K562 (cell line): ENCODE measurements at regions of chr6 and their contacts with region 1.

Region 1: GRCh38 chr6:26031595-26032339 is 55.5 kb upstream of the HFE start:
- DNase-seq: peak; percentile 82 to 99 (median 94)
- ATAC-seq: peak; percentile 67
- H3K4me3 ChIP-seq: peak overlapping the region; percentile 61
- H3K27ac ChIP-seq: peak overlapping the region; percentile 99
- H3K4me1 ChIP-seq: peaks cover 16 to 42% of the 10 kb centered on the region in 2 experiments
- H3K27me3 ChIP-seq: no peaks in the 10 kb centered on the region
- CTCF ChIP-seq: peak; percentile 28 to 60 (median 40)
- EP300 ChIP-seq: peak; percentile 77
- POLR2A ChIP-seq: peak; percentile 100
- RAD21 ChIP-seq: peak; percentile 4 to 31; a peak in 1 of 4 replicates

Region 2: GRCh38 chr6:25992413-25993037 is 39.2 kb before region 1 on chr6:
- CTCF ChIA-PET with region 1: no interaction called
- POLR2A ChIA-PET with region 1: interaction called, 47 read pairs
- in situ Hi-C with region 1: no loop called
- intact Hi-C with region 1: no loop called
- DNase-seq: peak; percentile 95 to 98 (median 95)
- ATAC-seq: peak; percentile 93
- H3K4me3 ChIP-seq: peak overlapping the region; percentile 72
- H3K27ac ChIP-seq: peak overlapping the region; percentile 95
- H3K4me1 ChIP-seq: peaks cover 10 to 11% of the 10 kb centered on the region in 2 experiments
- H3K27me3 ChIP-seq: no peaks in the 10 kb centered on the region
- CTCF ChIP-seq: peak; percentile 100
- EP300 ChIP-seq: peak; percentile 44
- POLR2A ChIP-seq: peak; percentile 93
- RAD21 ChIP-seq: peak; percentile 82 to 91

Region 3: DNA sequence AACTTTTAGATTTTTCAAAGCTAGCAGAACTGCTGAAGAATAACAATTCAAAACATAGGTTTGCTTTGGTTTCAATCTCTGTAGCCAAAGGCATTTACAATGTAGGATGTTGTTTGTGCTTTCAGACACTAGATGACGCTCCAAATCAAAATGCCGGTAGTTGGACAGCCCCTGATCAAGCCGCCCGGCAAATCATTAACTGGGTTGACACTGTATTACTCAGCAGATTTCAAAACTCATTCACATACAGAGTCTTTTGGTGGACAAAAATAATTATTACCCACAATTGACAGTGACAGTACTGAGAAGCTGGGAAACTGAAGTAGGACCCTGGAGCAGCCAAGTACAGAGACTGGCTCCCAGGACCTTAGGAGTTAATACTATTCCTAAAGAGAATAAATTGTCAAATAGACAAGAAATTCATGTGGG is 34.2 kb after region 1 on chr6:
- CTCF ChIA-PET with region 1: no interaction called
- POLR2A ChIA-PET with region 1: interaction called, 597 read pairs
- in situ Hi-C with region 1: no loop called
- intact Hi-C with region 1: no loop called
- DNase-seq: peak; percentile 80 to 91 (median 84)
- ATAC-seq: peak; percentile 91
- H3K4me3 ChIP-seq: no peak overlapping the region
- H3K27ac ChIP-seq: peak overlapping the region; percentile 70
- H3K4me1 ChIP-seq: peaks cover under 1 to 6% of the 10 kb centered on the region in 2 experiments; a peak in 2 of 5 replicates
- H3K27me3 ChIP-seq: no peaks in the 10 kb centered on the region
- CTCF ChIP-seq: peak; percentile 89 to 98 (median 93)
- EP300 ChIP-seq: peak; percentile 32; the same call in 1 of the 2 replicates
- POLR2A ChIP-seq: no peak
- RAD21 ChIP-seq: peak; percentile 99

Region 4: GRCh38 chr6:26122793-26123674 is 91.3 kb after region 1 on chr6:
- CTCF ChIA-PET with region 1: no interaction called
- POLR2A ChIA-PET with region 1: interaction called, 369 read pairs
- in situ Hi-C with region 1: no loop called
- intact Hi-C with region 1: loop called (anchors 1 kb)
- DNase-seq: peak; percentile 79 to 99 (median 86)
- ATAC-seq: peak; percentile 62
- H3K4me3 ChIP-seq: peak overlapping the region; percentile 72
- H3K27ac ChIP-seq: peak overlapping the region; percentile 95
- H3K4me1 ChIP-seq: peaks cover 3 to 7% of the 10 kb centered on the region in 2 experiments; a peak in 4 of 5 replicates
- H3K27me3 ChIP-seq: no peaks in the 10 kb centered on the region
- CTCF ChIP-seq: peak in 1 of 3 experiments; percentile 23; a peak in 1 of 6 replicates
- EP300 ChIP-seq: peak; percentile 99
- POLR2A ChIP-seq: no peak; the same call in none of the 2 replicates
- RAD21 ChIP-seq: 0 out of 4 replicates have a peak, but pooled peaks of 1 of the 2 experiments have one; percentile 6

Region 5: DNA sequence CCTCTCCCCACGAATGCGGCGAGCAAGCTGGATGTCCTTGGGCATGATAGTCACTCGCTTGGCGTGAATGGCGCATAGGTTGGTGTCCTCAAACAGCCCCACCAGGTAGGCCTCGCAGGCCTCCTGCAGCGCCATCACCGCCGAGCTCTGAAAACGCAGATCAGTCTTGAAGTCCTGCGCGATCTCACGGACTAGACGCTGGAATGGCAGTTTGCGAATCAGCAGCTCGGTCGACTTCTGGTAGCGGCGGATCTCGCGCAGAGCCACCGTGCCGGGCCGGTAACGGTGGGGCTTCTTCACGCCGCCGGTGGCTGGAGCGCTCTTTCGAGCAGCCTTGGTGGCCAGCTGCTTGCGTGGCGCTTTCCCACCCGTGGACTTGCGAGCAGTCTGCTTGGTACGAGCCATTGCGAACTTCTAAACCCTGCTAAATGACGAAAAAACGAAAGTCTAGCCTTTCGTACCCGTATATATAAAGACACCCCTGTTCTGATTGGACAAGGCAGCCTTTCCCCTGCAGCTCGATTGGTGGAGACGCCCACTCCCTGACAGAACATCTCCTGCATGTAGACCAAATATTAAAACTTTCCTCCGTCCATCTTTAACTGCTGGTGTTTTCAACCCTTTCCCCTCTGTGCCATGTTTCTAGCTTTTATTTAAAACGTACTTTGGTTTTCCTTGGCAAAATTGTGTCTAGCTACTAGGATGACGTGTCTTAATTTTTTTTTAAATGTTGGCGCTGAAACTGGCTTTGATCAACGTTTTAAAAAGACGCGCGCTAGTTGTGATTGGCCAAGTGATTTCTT is 165.3 kb after region 1 on chr6:
- CTCF ChIA-PET with region 1: no interaction called
- POLR2A ChIA-PET with region 1: interaction called, 225 read pairs
- in situ Hi-C with region 1: no loop called
- intact Hi-C with region 1: loop called (anchors 1 kb)
- DNase-seq: peak; percentile 89 to 93 (median 90)
- ATAC-seq: peak; percentile 53
- H3K4me3 ChIP-seq: peak overlapping the region; percentile 86
- H3K27ac ChIP-seq: peak overlapping the region; percentile 99
- H3K4me1 ChIP-seq: peaks cover 7 to 13% of the 10 kb centered on the region in 2 experiments
- H3K27me3 ChIP-seq: no peaks in the 10 kb centered on the region
- CTCF ChIP-seq: 0 out of 6 replicates have a peak, but pooled peaks of 1 of the 3 experiments have one; percentile 19
- EP300 ChIP-seq: peak; percentile 43
- POLR2A ChIP-seq: peak; percentile 97
- RAD21 ChIP-seq: 0 out of 4 replicates have a peak, but pooled peaks of 1 of the 2 experiments have one; percentile 8

Region 6: DNA sequence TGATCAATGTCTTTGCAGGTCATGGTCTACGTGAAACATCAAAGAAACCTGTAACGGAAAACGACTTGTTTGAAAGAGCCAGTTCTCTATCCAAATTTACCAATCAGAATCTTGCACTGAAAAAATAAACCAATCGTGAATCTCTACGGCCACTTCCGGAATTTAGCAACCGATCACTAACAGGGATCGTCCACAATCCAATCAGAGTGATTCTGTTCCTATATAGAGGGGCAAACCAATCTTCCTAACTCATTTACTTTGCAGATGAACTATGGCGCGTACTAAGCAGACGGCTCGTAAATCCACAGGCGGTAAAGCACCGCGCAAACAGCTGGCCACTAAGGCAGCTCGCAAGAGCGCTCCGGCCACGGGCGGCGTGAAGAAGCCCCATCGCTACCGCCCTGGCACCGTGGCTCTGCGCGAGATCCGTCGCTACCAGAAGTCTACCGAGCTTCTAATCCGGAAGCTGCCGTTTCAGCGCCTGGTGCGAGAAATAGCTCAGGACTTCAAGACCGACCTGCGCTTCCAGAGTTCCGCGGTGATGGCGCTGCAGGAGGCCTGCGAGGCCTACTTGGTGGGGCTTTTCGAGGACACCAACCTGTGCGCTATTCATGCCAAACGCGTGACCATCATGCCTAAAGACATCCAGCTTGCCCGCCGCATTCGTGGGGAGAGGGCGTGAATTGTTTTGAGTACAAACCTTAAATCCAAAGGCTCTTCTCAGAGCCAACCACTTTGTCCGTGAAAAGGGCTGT is 193.3 kb after region 1 on chr6:
- CTCF ChIA-PET with region 1: no interaction called
- POLR2A ChIA-PET with region 1: no interaction called
- in situ Hi-C with region 1: no loop called
- intact Hi-C with region 1: no loop called
- DNase-seq: no peak
- ATAC-seq: no peak
- H3K4me3 ChIP-seq: no peak overlapping the region
- H3K27ac ChIP-seq: no peak overlapping the region
- H3K4me1 ChIP-seq: peaks cover 0 to 7% of the 10 kb centered on the region in 2 experiments; a peak in 4 of 5 replicates
- H3K27me3 ChIP-seq: no peaks in the 10 kb centered on the region
- CTCF ChIP-seq: no peak
- EP300 ChIP-seq: no peak
- POLR2A ChIP-seq: no peak
- RAD21 ChIP-seq: no peak

Region 7: DNA sequence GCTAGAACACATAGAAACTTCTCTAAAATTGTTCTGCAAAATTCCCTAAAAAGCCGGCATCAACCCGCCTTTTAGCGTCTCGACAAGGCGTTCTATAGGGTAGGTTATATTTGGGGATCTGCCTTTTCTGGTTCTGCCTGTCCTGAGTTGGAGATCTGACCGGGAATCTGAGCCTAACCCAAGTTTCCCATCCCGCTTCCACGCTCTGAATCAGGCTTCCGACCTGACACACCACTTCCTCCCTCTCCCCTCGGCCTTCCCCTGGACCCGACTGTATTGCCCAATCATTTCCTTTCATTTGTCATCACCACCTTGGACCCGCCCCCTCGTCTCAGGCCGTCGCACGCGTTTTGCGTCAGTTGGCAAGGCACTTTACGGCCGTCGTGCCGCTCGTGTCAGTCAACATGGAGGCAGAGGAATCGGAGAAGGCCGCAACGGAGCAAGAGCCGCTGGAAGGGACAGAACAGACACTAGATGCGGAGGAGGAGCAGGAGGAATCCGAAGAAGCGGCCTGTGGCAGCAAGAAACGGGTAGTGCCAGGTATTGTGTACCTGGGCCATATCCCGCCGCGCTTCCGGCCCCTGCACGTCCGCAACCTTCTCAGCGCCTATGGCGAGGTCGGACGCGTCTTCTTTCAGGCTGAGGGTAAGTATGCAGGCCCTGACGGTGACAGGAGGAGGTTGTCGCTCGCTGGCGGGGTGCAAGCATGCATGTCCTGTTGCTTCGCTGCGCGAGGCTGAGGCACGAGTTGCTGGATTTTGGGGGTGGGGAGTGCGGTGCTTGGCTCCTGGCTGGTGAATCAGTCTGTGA is 565.0 kb after region 1 on chr6 and contains the start of gene ABT1:
- CTCF ChIA-PET with region 1: no interaction called
- POLR2A ChIA-PET with region 1: interaction called, 10 read pairs
- in situ Hi-C with region 1: no loop called
- intact Hi-C with region 1: no loop called
- DNase-seq: peak; percentile 95 to 100 (median 97)
- ATAC-seq: peak; percentile 83
- H3K4me3 ChIP-seq: peak within 1 kb of the TSS; percentile 91
- H3K27ac ChIP-seq: peak within 1 kb of the TSS; percentile 88
- H3K4me1 ChIP-seq: peaks cover 16 to 19% of the 10 kb centered on the region in 2 experiments; a peak in 4 of 5 replicates
- H3K27me3 ChIP-seq: no peaks in the 10 kb centered on the region
- CTCF ChIP-seq: no peak; a peak in 1 of 6 replicates
- EP300 ChIP-seq: peak; percentile 82
- POLR2A ChIP-seq: peak; percentile 97
- RAD21 ChIP-seq: 0 out of 4 replicates have a peak, but pooled peaks of 1 of the 2 experiments have one; percentile 4
- polyA plus RNA-seq, gene ABT1: 8.8 to 25.2 TPM

Region 8: GRCh38 chr6:27893059-27893835 is 1861.5 kb after region 1 on chr6:
- CTCF ChIA-PET with region 1: no interaction called
- POLR2A ChIA-PET with region 1: interaction called, 10 read pairs
- in situ Hi-C with region 1: no loop called
- intact Hi-C with region 1: loop called (anchors 5 kb)
- DNase-seq: peak; percentile 84 to 99 (median 92)
- ATAC-seq: peak; percentile 71
- H3K4me3 ChIP-seq: peak overlapping the region; percentile 79
- H3K27ac ChIP-seq: peak overlapping the region; percentile 95
- H3K4me1 ChIP-seq: peaks cover 19 to 38% of the 10 kb centered on the region in 2 experiments
- H3K27me3 ChIP-seq: no peaks in the 10 kb centered on the region
- CTCF ChIP-seq: peak in 1 of 3 experiments; percentile 14; a peak in 1 of 6 replicates
- EP300 ChIP-seq: peak; percentile 62; the same call in 1 of the 2 replicates
- POLR2A ChIP-seq: peak; percentile 100
- RAD21 ChIP-seq: no peak